ENCODE measurements at regions of chr6 and their contacts with region 1.

Region 1: DNA sequence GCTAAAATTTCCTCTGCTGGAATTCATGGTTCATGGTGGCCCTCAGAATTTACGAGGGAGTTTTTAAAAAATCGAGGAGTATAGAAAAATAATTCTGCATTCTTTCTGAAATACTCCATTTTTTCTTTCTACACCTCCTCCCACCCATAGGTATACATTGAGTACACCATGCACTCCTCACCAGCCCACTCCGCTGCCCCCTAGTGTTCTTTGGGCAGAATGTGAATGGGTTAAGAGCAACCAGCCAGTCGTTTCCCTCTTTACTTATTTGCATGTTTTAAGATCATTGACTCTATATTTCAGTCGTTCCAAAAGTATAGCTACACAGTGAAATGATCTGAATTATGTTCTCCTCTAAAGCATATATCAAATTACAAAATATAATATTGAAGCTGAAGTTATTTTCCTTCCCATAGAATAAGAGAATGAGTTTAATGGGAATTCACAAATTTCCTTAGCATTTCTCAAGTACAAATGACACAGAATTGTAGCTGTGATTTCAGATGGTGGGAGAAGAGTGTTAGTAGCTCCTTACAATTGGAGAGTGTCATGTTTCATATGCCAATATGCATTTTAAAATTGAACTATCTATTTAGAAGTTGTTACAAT is 977.7 kb upstream of the SLC35B3 start:
- DNase-seq: no peak

Region 2: GRCh38 chr6:9250852-9251251 is 162.2 kb before region 1 on chr6:
- intact Hi-C with region 1: loop called (anchors 2 kb)
- DNase-seq: no peak

Region 3: GRCh38 chr6:9437836-9438235 is 24.8 kb after region 1 on chr6:
- intact Hi-C with region 1: no loop called
- DNase-seq: no peak